Activated CD8-positive, alpha-beta T cell treated with anti-CD3 and anti-CD28 coated beads for 36 hours (primary cell): ENCODE measurements at regions of chr19 and their contacts with region 1.

Region 1: GRCh38 chr19:14536926-14537692 is 7.7 kb downstream of the TECR start:
- DNase-seq: peak; percentile 75
- ATAC-seq: peak; percentile 89
- H3K4me3 Mint-ChIP-seq: no peak overlapping the region
- H3K27ac Mint-ChIP-seq: peak overlapping the region; percentile 61
- H3K4me1 Mint-ChIP-seq: peaks cover 39% of the 10 kb centered on the region
- H3K27me3 Mint-ChIP-seq: no peaks in the 10 kb centered on the region
- CTCF ChIP-seq: no peak

Region 2: GRCh38 chr19:14550201-14550784 is 13.2 kb after region 1 on chr19:
- CTCF ChIA-PET with region 1: interaction called, 14 read pairs
- POLR2A ChIA-PET with region 1: interaction called, 4 read pairs
- intact Hi-C with region 1: no loop called
- DNase-seq: peak; percentile 40
- ATAC-seq: no peak
- H3K4me3 Mint-ChIP-seq: no peak overlapping the region
- H3K27ac Mint-ChIP-seq: peak overlapping the region; percentile 35
- H3K4me1 Mint-ChIP-seq: peaks cover 40% of the 10 kb centered on the region
- H3K27me3 Mint-ChIP-seq: no peaks in the 10 kb centered on the region
- CTCF ChIP-seq: no peak

Region 3: DNA sequence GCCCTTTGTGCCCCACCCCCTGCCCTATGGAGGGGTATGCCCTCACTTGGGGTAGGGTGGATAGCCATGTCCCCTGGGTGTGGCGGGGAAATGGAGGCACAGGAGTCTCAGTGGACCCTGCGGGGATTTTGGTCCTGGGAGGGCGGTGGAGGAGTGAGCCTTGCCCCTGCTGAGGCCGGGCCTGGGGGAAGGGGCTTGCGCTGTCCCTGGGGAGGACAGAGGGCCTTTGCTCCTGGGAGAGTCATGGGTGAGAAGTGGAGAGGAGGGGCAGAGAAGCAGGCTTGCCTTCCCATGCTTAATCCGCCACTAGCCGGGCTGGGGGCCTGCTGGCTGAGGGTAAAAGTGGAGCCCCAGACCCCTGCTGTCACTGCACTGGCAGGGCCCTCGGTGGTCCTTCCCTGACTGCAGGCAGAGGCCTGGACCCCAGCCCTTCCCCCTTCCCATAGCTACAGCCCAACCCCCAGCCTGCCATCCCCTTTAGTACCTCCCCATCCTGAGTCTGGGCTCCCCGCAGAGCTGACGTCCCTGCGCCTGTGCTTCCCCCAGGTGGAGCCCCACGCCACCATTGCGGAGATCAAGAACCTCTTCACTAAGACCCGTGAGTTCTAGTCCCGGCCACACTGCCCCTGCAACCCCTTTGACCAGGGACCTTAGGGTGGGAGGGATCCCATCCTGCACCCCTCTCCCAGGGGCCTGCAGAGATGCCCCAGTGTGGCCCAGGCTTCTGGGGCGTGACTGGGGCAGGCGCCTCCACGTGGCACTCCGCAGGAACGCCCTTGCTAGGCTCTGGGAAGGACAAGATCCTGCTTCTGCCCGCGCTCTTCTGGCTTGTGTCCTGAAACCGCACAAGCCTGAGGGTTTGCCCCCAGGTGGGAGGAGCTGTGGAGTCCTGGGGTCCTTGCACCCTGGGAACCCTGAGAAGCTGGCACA is 25.8 kb after region 1 on chr19:
- CTCF ChIA-PET with region 1: no interaction called
- POLR2A ChIA-PET with region 1: no interaction called
- intact Hi-C with region 1: no loop called
- DNase-seq: no peak
- ATAC-seq: no peak
- H3K4me3 Mint-ChIP-seq: no peak overlapping the region
- H3K27ac Mint-ChIP-seq: peak overlapping the region; percentile 11
- H3K4me1 Mint-ChIP-seq: peaks cover 29% of the 10 kb centered on the region
- H3K27me3 Mint-ChIP-seq: no peaks in the 10 kb centered on the region
- CTCF ChIP-seq: no peak